ENCODE measurements at regions of chr20 and their contacts with region 1.

Region 1: GRCh38 chr20:25390538-25391528 is at the start of gene ABHD12:
- DNase-seq: peak; percentile 86 to 97 (median 92)
- ATAC-seq: peak; percentile 89
- H3K4me3 ChIP-seq: peak within 1 kb of the TSS; percentile 75
- H3K4me3 Mint-ChIP-seq: peak within 1 kb of the TSS; percentile 92
- H3K27ac ChIP-seq: peak within 1 kb of the TSS in 1 of 2 donors; percentile 42
- H3K27ac Mint-ChIP-seq: peak within 1 kb of the TSS; percentile 84
- H3K4me1 ChIP-seq: peaks cover 10% of the 10 kb centered on the region
- H3K4me1 Mint-ChIP-seq: peaks cover 23% of the 10 kb centered on the region
- H3K27me3 ChIP-seq: no peaks in the 10 kb centered on the region
- H3K27me3 Mint-ChIP-seq: no peaks in the 10 kb centered on the region
- CTCF ChIP-seq: no peak
- total RNA-seq, gene ABHD12: 13.4 to 17.0 TPM

Region 2: GRCh38 chr20:25247956-25248785 is 142.7 kb before region 1 on chr20 and contains the start of gene PYGB:
- CTCF ChIA-PET with region 1: interaction called, 4 read pairs
- POLR2A ChIA-PET with region 1: interaction called, 7 read pairs
- intact Hi-C with region 1: loop called in 1 of 2 experiments (anchors 2 kb)
- DNase-seq: peak; percentile 59 to 90 (median 72)
- ATAC-seq: peak; percentile 86
- H3K4me3 ChIP-seq: peak within 1 kb of the TSS; percentile 94
- H3K4me3 Mint-ChIP-seq: peak within 1 kb of the TSS; percentile 95
- H3K27ac ChIP-seq: no peak within 1 kb of the TSS
- H3K27ac Mint-ChIP-seq: peak within 1 kb of the TSS; percentile 80
- H3K4me1 ChIP-seq: peaks cover 29% of the 10 kb centered on the region
- H3K4me1 Mint-ChIP-seq: peaks cover 56% of the 10 kb centered on the region
- H3K27me3 ChIP-seq: no peaks in the 10 kb centered on the region
- H3K27me3 Mint-ChIP-seq: peaks cover 6% of the 10 kb centered on the region
- CTCF ChIP-seq: no peak
- total RNA-seq, gene PYGB: 26.3 to 27.5 TPM

Region 3: GRCh38 chr20:25360635-25361286 is 30.1 kb before region 1 on chr20:
- CTCF ChIA-PET with region 1: no interaction called
- POLR2A ChIA-PET with region 1: no interaction called
- intact Hi-C with region 1: no loop called
- DNase-seq: peak in 2 of 14 experiments; percentile 17
- ATAC-seq: no peak
- H3K4me3 ChIP-seq: no peak overlapping the region
- H3K4me3 Mint-ChIP-seq: no peak overlapping the region
- H3K27ac ChIP-seq: no peak overlapping the region
- H3K27ac Mint-ChIP-seq: no peak overlapping the region
- H3K4me1 ChIP-seq: peaks cover 7% of the 10 kb centered on the region
- H3K4me1 Mint-ChIP-seq: peaks cover 33% of the 10 kb centered on the region
- H3K27me3 ChIP-seq: no peaks in the 10 kb centered on the region
- H3K27me3 Mint-ChIP-seq: no peaks in the 10 kb centered on the region
- CTCF ChIP-seq: no peak

Region 4: GRCh38 chr20:25407311-25408169 is 16.7 kb after region 1 on chr20 and contains the start of gene GINS1:
- CTCF ChIA-PET with region 1: interaction called, 3 read pairs
- POLR2A ChIA-PET with region 1: interaction called, 10 read pairs
- intact Hi-C with region 1: loop called in 1 of 2 experiments (anchors 2 kb)
- DNase-seq: peak; percentile 40 to 83 (median 58)
- ATAC-seq: peak; percentile 88
- H3K4me3 ChIP-seq: peak within 1 kb of the TSS; percentile 76
- H3K4me3 Mint-ChIP-seq: peak within 1 kb of the TSS; percentile 95
- H3K27ac ChIP-seq: no peak within 1 kb of the TSS
- H3K27ac Mint-ChIP-seq: peak within 1 kb of the TSS; percentile 78
- H3K4me1 ChIP-seq: peaks cover 11% of the 10 kb centered on the region
- H3K4me1 Mint-ChIP-seq: peaks cover 13% of the 10 kb centered on the region
- H3K27me3 ChIP-seq: no peaks in the 10 kb centered on the region
- H3K27me3 Mint-ChIP-seq: no peaks in the 10 kb centered on the region
- CTCF ChIP-seq: no peak
- total RNA-seq, gene GINS1: 0.08 to 0.17 TPM

Region 5: GRCh38 chr20:25629816-25630499 is 239.1 kb after region 1 on chr20:
- CTCF ChIA-PET with region 1: no interaction called
- POLR2A ChIA-PET with region 1: no interaction called
- intact Hi-C with region 1: loop called in 1 of 2 experiments (anchors 5 kb)
- DNase-seq: no peak
- ATAC-seq: no peak
- H3K4me3 ChIP-seq: no peak overlapping the region
- H3K4me3 Mint-ChIP-seq: no peak overlapping the region
- H3K27ac ChIP-seq: no peak overlapping the region
- H3K27ac Mint-ChIP-seq: no peak overlapping the region
- H3K4me1 ChIP-seq: no peaks in the 10 kb centered on the region
- H3K4me1 Mint-ChIP-seq: no peaks in the 10 kb centered on the region
- H3K27me3 ChIP-seq: no peaks in the 10 kb centered on the region
- H3K27me3 Mint-ChIP-seq: no peaks in the 10 kb centered on the region
- CTCF ChIP-seq: no peak

Region 6: DNA sequence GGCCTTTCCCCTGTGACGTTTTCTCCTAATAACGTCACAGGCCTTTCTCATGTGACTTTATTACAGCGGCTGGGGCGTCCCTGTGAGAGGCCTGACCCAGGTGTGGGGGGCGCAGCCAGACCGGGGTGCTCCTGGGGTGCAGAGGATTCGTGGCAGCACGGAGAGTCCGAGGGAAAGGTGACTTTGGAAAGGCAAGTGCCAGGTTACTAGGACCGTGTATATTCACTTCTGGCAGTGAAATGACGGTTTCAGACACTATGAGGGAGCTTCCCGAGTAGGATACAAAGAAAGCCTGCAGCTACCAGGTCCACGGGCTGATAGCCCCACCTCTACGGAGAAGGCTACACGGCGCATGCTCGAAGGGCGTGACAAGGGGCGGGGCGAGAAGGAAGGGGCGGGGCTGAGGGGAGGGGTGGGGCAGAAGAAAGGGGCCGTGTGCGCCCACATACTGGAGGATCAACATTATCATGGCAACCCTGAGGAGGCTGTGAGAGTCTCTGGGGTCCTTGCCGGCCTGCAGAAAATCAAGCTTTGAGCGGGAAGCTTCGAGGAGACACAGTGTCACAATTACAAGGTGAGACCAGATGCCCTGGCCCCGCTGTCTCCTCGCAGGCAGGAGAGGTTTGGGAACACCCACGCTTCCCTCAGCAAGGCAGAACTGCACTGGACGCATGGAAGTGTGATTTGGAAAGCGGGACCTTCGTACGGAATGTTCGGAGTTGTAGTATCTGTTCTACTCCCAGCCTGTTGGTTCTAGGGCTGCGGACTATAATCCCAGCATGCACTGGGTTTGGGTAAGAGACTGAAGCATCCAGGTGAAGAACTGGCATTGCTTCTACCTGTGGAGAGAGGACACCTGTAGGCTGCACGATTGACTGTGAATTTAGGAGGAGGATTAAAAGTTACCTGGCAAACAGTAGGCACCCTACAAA is 360.2 kb after region 1 on chr20:
- CTCF ChIA-PET with region 1: no interaction called
- POLR2A ChIA-PET with region 1: no interaction called
- intact Hi-C with region 1: loop called in 1 of 2 experiments (anchors 5 kb)
- DNase-seq: peak; percentile 45 to 80 (median 56)
- ATAC-seq: peak; percentile 97
- H3K4me3 ChIP-seq: peak overlapping the region; percentile 56
- H3K4me3 Mint-ChIP-seq: peak overlapping the region; percentile 93
- H3K27ac ChIP-seq: no peak overlapping the region
- H3K27ac Mint-ChIP-seq: peak overlapping the region; percentile 82
- H3K4me1 ChIP-seq: peaks cover 17% of the 10 kb centered on the region
- H3K4me1 Mint-ChIP-seq: peaks cover 15% of the 10 kb centered on the region
- H3K27me3 ChIP-seq: no peaks in the 10 kb centered on the region
- H3K27me3 Mint-ChIP-seq: no peaks in the 10 kb centered on the region
- CTCF ChIP-seq: no peak

Measured in CD4-positive, alpha-beta T cell (primary cell).